Adrenal gland (tissue), 19 donors: ENCODE measurements at regions of chr15 and their contacts with region 1.

Region 1: GRCh38 chr15:51649659-51650521 is 27.3 kb upstream of the DMXL2 start:
- DNase-seq: peak in 5 of 7 donors; percentile 20 to 59 (median 51)
- H3K4me3 ChIP-seq: no peak overlapping the region
- H3K27ac ChIP-seq: no peak overlapping the region
- H3K4me1 ChIP-seq: no peaks in the 10 kb centered on the region
- H3K27me3 ChIP-seq: no peaks in the 10 kb centered on the region
- CTCF ChIP-seq: peak; percentile 55 to 91 (median 81)
- POLR2A ChIP-seq: no peak

Region 2: GRCh38 chr15:51771773-51772172 is 121.9 kb after region 1 on chr15:
- intact Hi-C with region 1: loop called (anchors 2 to 5 kb)
- DNase-seq: no peak
- H3K4me3 ChIP-seq: no peak overlapping the region
- H3K27ac ChIP-seq: no peak overlapping the region
- H3K4me1 ChIP-seq: peaks cover 0 to 16% of the 10 kb centered on the region in 2 donors
- H3K27me3 ChIP-seq: no peaks in the 10 kb centered on the region
- CTCF ChIP-seq: no peak
- POLR2A ChIP-seq: no peak

Region 3: GRCh38 chr15:51776952-51777574 is 127.2 kb after region 1 on chr15:
- intact Hi-C with region 1: loop called (anchors 2 to 5 kb)
- DNase-seq: peak; percentile 61 to 88 (median 72)
- H3K4me3 ChIP-seq: no peak overlapping the region
- H3K27ac ChIP-seq: no peak overlapping the region
- H3K4me1 ChIP-seq: peaks cover 0 to 11% of the 10 kb centered on the region in 2 donors
- H3K27me3 ChIP-seq: no peaks in the 10 kb centered on the region
- CTCF ChIP-seq: peak; percentile 51 to 85 (median 72)
- POLR2A ChIP-seq: no peak

Region 4: DNA sequence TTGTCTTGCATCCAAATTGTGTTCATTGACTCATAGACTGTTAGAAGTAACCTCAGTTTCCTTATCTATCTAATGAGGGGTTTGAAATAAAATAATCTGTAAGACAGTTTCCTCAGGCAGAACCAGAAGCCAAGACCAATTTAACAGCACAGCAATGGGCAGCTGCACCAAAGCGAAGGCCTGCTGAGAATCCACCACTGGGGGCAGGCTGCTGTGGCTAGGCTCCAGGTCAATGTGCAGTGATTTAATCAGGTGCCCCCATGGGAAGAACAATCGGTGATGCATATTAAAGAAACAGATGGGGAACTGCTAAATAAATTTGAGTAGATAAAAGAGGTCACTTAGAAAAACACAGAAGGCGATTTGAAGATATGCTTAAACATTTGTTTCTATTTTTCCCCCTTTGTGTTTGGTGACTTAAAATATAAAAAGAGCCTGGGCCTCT is 151.5 kb after region 1 on chr15:
- intact Hi-C with region 1: no loop called
- DNase-seq: peak in 4 of 7 donors; percentile 19 to 34 (median 27)
- H3K4me3 ChIP-seq: no peak overlapping the region
- H3K27ac ChIP-seq: no peak overlapping the region
- H3K4me1 ChIP-seq: no peaks in the 10 kb centered on the region
- H3K27me3 ChIP-seq: no peaks in the 10 kb centered on the region
- CTCF ChIP-seq: peak in 5 of 6 experiments; percentile 17 to 41 (median 33)
- POLR2A ChIP-seq: no peak